ENCODE measurements at regions of chr16 and their contacts with region 1.

Region 1: DNA sequence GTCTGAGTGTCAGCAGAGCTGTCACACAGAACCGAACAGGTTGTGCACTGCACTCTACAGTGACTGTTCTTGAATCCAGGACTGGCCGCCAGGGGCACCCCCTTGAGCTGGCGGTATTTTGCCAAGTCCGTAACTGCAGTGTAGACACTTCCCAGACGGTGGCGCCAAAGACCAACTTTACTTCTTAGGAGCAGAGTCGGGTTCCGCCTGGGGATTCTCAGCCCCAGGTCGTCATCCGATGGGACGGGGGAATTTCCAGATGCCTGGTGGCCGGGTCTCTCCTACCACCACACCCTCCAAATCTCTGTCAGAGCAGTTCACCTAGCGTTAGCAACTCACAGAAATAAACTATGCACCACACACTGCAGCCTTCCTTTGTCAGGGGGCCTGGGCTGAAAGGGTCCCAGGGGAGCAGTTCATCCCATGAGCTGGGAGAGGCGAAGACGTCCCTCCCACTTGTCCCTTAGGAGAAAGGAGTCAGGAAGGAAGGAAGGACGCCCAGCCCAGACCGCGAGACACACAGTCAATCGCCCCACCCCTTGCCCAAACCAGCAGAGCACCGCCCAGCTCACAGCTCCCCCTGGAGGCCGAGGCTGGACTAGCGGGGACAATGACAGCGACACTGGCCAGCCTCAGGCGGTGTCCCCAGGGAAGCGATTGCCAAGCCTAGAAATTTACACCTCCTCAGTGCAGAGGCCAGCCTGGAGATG is 7.4 kb upstream of the RIPOR1 start:
- DNase-seq: peak; percentile 98
- ATAC-seq: peak; percentile 93

Region 2: GRCh38 chr16:67667817-67668494 is 146.7 kb after region 1 on chr16:
- intact Hi-C with region 1: loop called (anchors 10 kb)
- DNase-seq: peak; percentile 85
- ATAC-seq: peak; percentile 90

Measured in sciatic nerve (tissue), 2 donors.